ENCODE measurements at regions of chr18 and their contacts with region 1.

Region 1: DNA sequence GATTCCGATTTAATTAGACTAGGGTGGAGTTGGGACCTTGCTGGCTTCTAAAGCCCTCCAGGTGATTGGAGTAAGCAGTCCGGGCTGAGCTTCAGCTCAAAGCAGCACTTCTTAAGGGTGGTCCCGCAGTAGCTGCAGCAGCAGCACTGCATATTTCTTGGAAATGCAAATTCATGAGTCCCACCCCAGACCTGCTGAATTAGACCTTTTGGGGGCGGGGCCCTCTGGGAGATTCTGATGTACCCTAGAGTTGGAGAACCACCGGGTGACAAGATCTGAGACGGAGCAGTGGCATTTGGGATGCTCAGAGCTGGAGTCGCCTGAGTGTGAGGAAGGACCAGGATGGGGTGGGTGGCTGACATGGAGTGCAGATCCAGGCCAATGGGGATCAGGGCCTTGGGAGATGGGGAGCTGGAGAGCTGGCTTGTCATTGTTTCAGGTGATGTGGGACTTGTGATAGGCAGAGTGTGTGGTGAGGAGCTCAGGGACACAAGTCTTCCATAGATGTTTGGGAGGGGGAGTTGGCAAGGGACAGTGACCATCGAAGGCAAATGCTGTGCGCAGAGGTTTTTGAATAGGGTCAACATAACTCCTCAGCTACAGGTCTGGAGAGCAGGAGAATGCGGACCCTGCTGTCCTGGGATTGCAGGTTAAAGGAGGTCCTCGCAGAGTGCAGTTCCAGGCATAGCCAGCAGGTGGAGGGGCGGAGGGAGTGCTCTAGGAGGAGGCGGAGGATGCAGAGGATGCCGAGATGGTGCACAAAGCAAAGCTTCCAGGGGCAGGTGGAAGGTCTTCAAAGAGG is 130.9 kb upstream of the RAB12 start:
- DNase-seq: peak; percentile 40
- ATAC-seq: peak; percentile 53 to 71

Region 2: DNA sequence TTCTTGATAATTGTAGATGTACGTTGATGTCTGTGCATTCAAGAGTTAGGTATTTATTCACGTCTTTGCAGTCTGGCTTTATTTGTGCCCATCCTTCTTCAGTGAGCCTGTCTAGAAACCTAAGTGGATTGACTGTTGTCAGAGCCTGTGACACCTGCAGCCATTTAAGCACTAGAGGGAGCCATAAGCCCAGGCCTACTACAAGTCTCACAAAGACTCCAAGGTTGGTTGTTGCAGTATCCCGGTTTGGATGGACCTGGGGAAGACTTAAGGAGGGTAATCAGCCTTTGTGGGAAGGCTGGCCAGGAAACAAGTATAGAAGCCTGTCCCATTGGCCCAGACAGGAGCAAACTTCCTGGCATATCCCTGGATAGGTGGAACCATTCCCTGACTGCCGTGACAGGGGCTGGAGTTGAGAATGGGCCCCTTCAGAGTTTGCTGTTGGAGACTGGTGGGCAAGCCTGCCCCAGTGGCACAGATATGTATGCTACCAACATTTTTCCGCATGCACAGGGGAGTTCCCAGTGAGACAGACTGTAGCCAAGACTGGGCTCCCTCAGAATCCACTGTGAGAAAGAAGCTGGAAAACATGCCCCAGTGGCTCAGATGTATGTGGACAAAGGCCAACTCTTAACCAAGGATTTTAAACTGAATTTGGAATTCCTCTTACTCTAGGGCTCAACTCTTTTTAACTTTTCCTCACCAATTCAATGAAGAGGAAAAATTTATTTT is 1256.8 kb before region 1 on chr18:
- intact Hi-C with region 1: loop called in 1 of 2 experiments (anchors 5 kb)
- DNase-seq: no peak
- ATAC-seq: peak; percentile 81 to 87

Region 3: GRCh38 chr18:8416212-8417005 is 62.0 kb before region 1 on chr18:
- intact Hi-C with region 1: no loop called
- DNase-seq: no peak
- ATAC-seq: peak in 1 of 2 donors; percentile 11